Activated naive CD8-positive, alpha-beta T cell treated with anti-CD3 and anti-CD28 coated beads, Interleukin-2, amount 10 ng/mL, durations not matched to agents 7 days and 5 days (primary cell): ENCODE measurements at regions of chr2 and their contacts with region 1.

Region 1: GRCh38 chr2:23926750-23927571 is at the start of gene ATAD2B:
- DNase-seq: peak; percentile 98
- ATAC-seq: peak; percentile 84
- H3K4me3 Mint-ChIP-seq: peak within 1 kb of the TSS; percentile 94
- H3K27ac Mint-ChIP-seq: peak within 1 kb of the TSS; percentile 98
- H3K4me1 Mint-ChIP-seq: peaks cover 33% of the 10 kb centered on the region
- H3K27me3 Mint-ChIP-seq: no peaks in the 10 kb centered on the region
- total RNA-seq, gene ATAD2B: 33.2 to 34.6 TPM

Region 2: GRCh38 chr2:23939987-23940717 is 13.2 kb after region 1 on chr2 and contains the start of gene UBXN2A:
- POLR2A ChIA-PET with region 1: interaction called, 140 read pairs
- DNase-seq: peak; percentile 93
- ATAC-seq: peak; percentile 89
- H3K4me3 Mint-ChIP-seq: peak within 1 kb of the TSS; percentile 96
- H3K27ac Mint-ChIP-seq: peak within 1 kb of the TSS; percentile 88
- H3K4me1 Mint-ChIP-seq: peaks cover 16% of the 10 kb centered on the region
- H3K27me3 Mint-ChIP-seq: peaks cover 9% of the 10 kb centered on the region
- total RNA-seq, gene UBXN2A: 11.2 to 12.4 TPM

Region 3: GRCh38 chr2:24046930-24047702 is 120.2 kb after region 1 on chr2 and contains the start of gene WDCP:
- POLR2A ChIA-PET with region 1: interaction called, 22 read pairs
- DNase-seq: peak; percentile 90
- ATAC-seq: peak; percentile 100
- H3K4me3 Mint-ChIP-seq: peak within 1 kb of the TSS; percentile 99
- H3K27ac Mint-ChIP-seq: peak within 1 kb of the TSS; percentile 95
- H3K4me1 Mint-ChIP-seq: peaks cover 24% of the 10 kb centered on the region
- H3K27me3 Mint-ChIP-seq: peaks cover 2% of the 10 kb centered on the region
- total RNA-seq, gene WDCP: 15.6 to 19.4 TPM

Region 4: GRCh38 chr2:24084386-24085361 is 157.7 kb after region 1 on chr2 and contains the start of gene TP53I3:
- POLR2A ChIA-PET with region 1: interaction called, 40 read pairs
- DNase-seq: peak; percentile 96
- ATAC-seq: peak; percentile 93
- H3K4me3 Mint-ChIP-seq: peak within 1 kb of the TSS; percentile 96
- H3K27ac Mint-ChIP-seq: peak within 1 kb of the TSS; percentile 95
- H3K4me1 Mint-ChIP-seq: peaks cover 25% of the 10 kb centered on the region
- H3K27me3 Mint-ChIP-seq: no peaks in the 10 kb centered on the region
- total RNA-seq, gene TP53I3: 3.6 to 3.7 TPM